Natural killer cell (primary cell): ENCODE measurements at regions of chr12 and their contacts with region 1.

Region 1: GRCh38 chr12:64679487-64679983 is 69.2 kb downstream of the RASSF3 start:
- DNase-seq: peak; percentile 65 to 89
- ATAC-seq: peak; percentile 71 to 86 (median 85)
- H3K4me3 ChIP-seq: peak overlapping the region; percentile 17
- H3K4me3 Mint-ChIP-seq: peak overlapping the region; percentile 74
- H3K27ac ChIP-seq: peak overlapping the region; percentile 96
- H3K27ac Mint-ChIP-seq: peak overlapping the region; percentile 91 to 93
- H3K4me1 ChIP-seq: peaks cover 94% of the 10 kb centered on the region
- H3K4me1 Mint-ChIP-seq: peaks cover 74 to 77% of the 10 kb centered on the region in 2 donors
- H3K27me3 ChIP-seq: no peaks in the 10 kb centered on the region
- H3K27me3 Mint-ChIP-seq: no peaks in the 10 kb centered on the region
- CTCF ChIP-seq: no peak

Region 2: GRCh38 chr12:64451687-64452558 is 227.6 kb before region 1 on chr12 and contains the start of gene TBK1:
- intact Hi-C with region 1: loop called (anchors 10 kb)
- DNase-seq: peak; percentile 72 to 77
- ATAC-seq: peak; percentile 71 to 84 (median 80)
- H3K4me3 ChIP-seq: peak within 1 kb of the TSS; percentile 98
- H3K4me3 Mint-ChIP-seq: peak within 1 kb of the TSS; percentile 96
- H3K27ac ChIP-seq: peak within 1 kb of the TSS; percentile 89
- H3K27ac Mint-ChIP-seq: peak within 1 kb of the TSS; percentile 94 to 97
- H3K4me1 ChIP-seq: peaks cover 11% of the 10 kb centered on the region
- H3K4me1 Mint-ChIP-seq: peaks cover 40 to 46% of the 10 kb centered on the region in 2 donors
- H3K27me3 ChIP-seq: no peaks in the 10 kb centered on the region
- H3K27me3 Mint-ChIP-seq: no peaks in the 10 kb centered on the region
- CTCF ChIP-seq: no peak
- total RNA-seq, gene TBK1: 48.4 to 57.1 (median 48.8) TPM

Region 3: GRCh38 chr12:64596252-64596793 is 83.2 kb before region 1 on chr12:
- intact Hi-C with region 1: no loop called
- DNase-seq: no peak
- ATAC-seq: peak in 1 of 3 donors; percentile 52
- H3K4me3 ChIP-seq: no peak overlapping the region
- H3K4me3 Mint-ChIP-seq: no peak overlapping the region
- H3K27ac ChIP-seq: no peak overlapping the region
- H3K27ac Mint-ChIP-seq: no peak overlapping the region
- H3K4me1 ChIP-seq: peaks cover 12% of the 10 kb centered on the region
- H3K4me1 Mint-ChIP-seq: peaks cover 11 to 15% of the 10 kb centered on the region in 2 donors
- H3K27me3 ChIP-seq: peaks cover 3% of the 10 kb centered on the region
- H3K27me3 Mint-ChIP-seq: peaks cover 28 to 45% of the 10 kb centered on the region in 2 donors
- CTCF ChIP-seq: no peak

Region 4: GRCh38 chr12:64656429-64656828 is 23.1 kb before region 1 on chr12:
- intact Hi-C with region 1: loop called (anchors 2 kb)
- DNase-seq: peak in 1 of 2 donors; percentile 14
- ATAC-seq: no peak
- H3K4me3 ChIP-seq: no peak overlapping the region
- H3K4me3 Mint-ChIP-seq: peak overlapping the region; percentile 25
- H3K27ac ChIP-seq: no peak overlapping the region
- H3K27ac Mint-ChIP-seq: peak overlapping the region; percentile 90 to 98
- H3K4me1 ChIP-seq: peaks cover 47% of the 10 kb centered on the region
- H3K4me1 Mint-ChIP-seq: peaks cover 69 to 75% of the 10 kb centered on the region in 2 donors
- H3K27me3 ChIP-seq: no peaks in the 10 kb centered on the region
- H3K27me3 Mint-ChIP-seq: no peaks in the 10 kb centered on the region
- CTCF ChIP-seq: no peak

Region 5: DNA sequence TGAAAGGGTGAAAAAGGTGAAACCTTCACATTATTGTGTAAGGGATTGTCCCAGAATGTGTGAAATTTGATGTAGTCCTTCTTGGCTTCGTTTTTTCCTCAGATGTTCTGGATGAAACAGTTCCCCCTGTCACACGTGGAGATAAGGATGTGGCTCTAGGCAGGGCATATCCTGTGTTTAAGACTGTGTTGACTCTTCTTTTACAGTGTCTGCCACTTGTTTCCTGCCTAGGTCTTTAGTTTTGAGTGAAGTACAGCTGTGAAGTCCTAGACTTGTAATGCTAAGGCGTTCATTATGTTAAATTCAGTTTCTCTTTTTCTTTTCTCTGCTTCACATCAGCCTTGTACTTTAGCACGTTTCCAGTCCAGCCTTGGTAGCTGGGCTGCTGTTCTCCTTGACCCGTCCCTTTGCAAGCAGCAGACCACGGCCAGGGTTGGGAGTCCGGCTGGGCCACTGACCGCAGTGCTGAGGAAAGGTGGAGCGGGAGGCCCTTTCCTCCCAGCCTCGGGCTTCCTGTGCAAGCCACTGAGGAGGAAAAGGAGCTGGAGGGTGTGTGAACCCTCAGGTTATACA is 10.2 kb before region 1 on chr12:
- intact Hi-C with region 1: loop called (anchors 1 kb)
- DNase-seq: peak; percentile 59 to 90
- ATAC-seq: peak; percentile 81 to 95 (median 90)
- H3K4me3 ChIP-seq: peak overlapping the region; percentile 49
- H3K4me3 Mint-ChIP-seq: peak overlapping the region; percentile 82
- H3K27ac ChIP-seq: peak overlapping the region; percentile 97
- H3K27ac Mint-ChIP-seq: peak overlapping the region; percentile 91 to 93
- H3K4me1 ChIP-seq: peaks cover 85% of the 10 kb centered on the region
- H3K4me1 Mint-ChIP-seq: peaks cover 85 to 90% of the 10 kb centered on the region in 2 donors
- H3K27me3 ChIP-seq: no peaks in the 10 kb centered on the region
- H3K27me3 Mint-ChIP-seq: no peaks in the 10 kb centered on the region
- CTCF ChIP-seq: no peak